ENCODE measurements at regions of chr19 and their contacts with region 1.

Region 1: GRCh38 chr19:53849237-53849676 is 18.4 kb upstream of the MYADM start:
- H3K4me3 Mint-ChIP-seq: peak overlapping the region; percentile 53
- H3K27ac Mint-ChIP-seq: peak overlapping the region; percentile 49
- H3K4me1 Mint-ChIP-seq: peaks cover 59% of the 10 kb centered on the region
- H3K27me3 Mint-ChIP-seq: peaks cover 15% of the 10 kb centered on the region

Region 2: GRCh38 chr19:53867225-53868090 is 18.2 kb after region 1 on chr19 and contains the start of gene MYADM:
- intact Hi-C with region 1: loop called (anchors 2 kb)
- H3K4me3 Mint-ChIP-seq: peak within 1 kb of the TSS; percentile 93
- H3K27ac Mint-ChIP-seq: peak within 1 kb of the TSS; percentile 95
- H3K4me1 Mint-ChIP-seq: peaks cover 59% of the 10 kb centered on the region
- H3K27me3 Mint-ChIP-seq: peaks cover 16% of the 10 kb centered on the region

Region 3: DNA sequence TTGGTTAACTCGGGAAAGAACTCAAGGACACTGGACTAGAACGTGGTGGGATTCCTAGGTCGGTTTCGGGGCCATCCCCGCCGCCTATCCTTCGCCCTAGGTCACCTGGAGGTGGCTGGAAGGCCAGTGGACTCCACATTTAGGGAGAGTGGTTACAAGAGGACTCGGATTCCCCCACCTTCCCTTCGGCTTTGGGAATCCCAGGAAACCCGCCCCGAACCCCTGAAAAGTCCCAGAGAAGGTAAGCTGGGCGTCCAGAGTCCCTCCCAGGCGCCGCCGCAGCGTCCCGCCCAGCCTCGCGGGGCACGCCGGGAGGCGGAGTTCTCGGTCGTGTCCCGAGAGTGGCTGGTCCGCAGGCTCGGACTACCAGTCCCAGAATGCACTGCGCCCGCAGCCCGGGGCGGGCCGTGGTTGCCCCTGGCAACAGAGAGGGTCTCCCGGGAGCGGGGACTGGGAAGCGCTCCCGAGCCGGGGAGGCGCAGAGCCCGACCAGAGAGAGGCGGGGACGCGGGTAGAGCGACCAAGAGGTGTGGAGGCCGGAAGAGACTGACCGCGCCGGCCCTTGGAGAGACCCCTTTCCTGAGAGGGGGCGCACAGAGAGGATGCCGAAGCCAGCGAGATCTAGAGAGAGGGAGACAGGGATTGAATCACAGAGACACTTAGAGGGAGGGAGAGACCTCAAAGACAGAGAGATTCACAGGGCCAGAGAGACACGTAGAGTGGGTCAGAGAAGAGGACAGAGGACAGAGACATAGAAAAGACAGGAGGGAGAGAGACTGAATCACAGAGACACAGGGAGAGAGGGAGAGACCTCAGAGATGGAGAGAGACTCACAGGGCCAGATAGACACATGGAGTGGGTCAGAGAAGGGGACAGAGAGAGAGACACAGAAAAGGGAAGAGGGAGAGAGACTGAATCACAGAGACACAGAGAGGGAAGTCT is 30.2 kb after region 1 on chr19:
- intact Hi-C with region 1: loop called (anchors 5 kb)
- H3K4me3 Mint-ChIP-seq: no peak overlapping the region
- H3K27ac Mint-ChIP-seq: no peak overlapping the region
- H3K4me1 Mint-ChIP-seq: peaks cover 39% of the 10 kb centered on the region
- H3K27me3 Mint-ChIP-seq: peaks cover 22% of the 10 kb centered on the region

Region 4: DNA sequence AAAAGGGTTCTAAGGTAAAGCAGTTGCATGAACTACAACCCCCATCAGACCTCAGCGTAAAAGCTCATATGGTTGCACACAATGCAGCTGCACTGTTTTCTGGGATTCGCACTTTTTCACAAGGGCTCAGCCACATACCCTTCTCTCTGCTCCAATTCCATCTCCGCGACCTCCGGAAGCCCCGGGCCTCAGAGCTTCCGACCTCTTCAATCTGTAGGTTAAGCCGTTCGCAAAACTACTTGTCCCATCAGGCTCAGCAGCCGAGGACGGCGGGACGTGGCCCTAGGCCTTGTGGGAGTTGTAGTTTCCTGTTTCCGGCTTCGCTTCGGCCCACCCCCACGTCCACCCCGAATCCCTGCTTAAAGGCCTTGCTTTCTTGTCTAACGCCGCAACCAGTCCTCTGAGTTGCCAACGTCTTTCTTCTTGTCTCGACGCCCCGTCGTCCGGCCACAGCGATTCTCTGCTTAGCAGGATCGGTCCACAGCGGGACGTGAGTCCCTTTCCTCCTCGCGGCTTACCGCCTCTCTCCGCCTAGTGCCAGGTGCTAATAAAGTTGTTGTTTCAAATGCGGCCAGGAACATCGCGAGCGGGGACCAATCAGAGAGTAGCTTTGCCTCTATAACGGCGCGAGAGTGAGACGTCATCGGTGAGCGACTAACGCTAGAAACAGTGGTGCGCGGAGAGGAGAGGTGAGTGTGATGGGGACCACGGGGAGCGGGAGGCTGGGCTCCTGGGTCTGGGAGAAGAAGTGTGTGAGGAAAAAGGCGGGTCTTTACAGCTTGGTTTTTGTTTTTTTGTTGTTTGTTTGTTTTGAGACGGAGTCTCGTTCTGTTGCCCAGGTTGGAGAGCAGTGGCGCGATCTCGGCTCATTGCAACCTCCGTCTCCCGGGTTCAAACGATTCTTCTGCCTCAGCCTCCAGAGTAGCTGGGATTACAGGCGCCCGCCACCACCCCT is 266.1 kb after region 1 on chr19 and contains the starts of genes PRPF31 and TFPT:
- intact Hi-C with region 1: no loop called
- H3K4me3 Mint-ChIP-seq: peak within 1 kb of the TSS; percentile 85
- H3K27ac Mint-ChIP-seq: peak within 1 kb of the TSS; percentile 94
- H3K4me1 Mint-ChIP-seq: peaks cover 48% of the 10 kb centered on the region
- H3K27me3 Mint-ChIP-seq: no peaks in the 10 kb centered on the region

Measured in dendritic cell treated with granulocyte-macrophage colony-stimulating factor and Interleukin-4, amounts not matched to agents 40 ng/mL and 50 ng/mL, for 4 days (primary cell).